Posterior vena cava (tissue), 2 donors: ENCODE measurements at regions of chr13 and their contacts with region 1.

Region 1: GRCh38 chr13:33679658-33680012 is 138.3 kb upstream of the RFC3 start:
- DNase-seq: no peak

Region 2: DNA sequence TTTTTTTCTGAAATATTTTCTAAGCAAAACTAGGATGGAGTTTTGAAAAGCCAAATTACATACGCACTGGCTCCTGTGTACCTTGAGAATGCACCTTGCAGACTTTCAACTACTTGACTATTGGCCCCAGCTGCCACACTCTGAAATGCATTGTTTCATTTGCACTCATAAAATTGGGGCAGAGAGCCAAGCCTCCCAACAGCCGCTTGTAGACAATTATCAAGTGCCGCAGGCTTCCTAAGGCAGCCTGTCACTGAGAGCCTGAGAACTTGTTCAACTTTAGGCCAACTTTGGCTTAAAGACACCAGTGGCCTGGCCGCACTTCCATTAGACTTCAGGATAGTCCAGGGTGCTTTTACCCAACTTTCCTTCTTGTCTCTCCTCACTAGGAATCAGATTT is 278.4 kb before region 1 on chr13:
- intact Hi-C with region 1: no loop called
- DNase-seq: no peak

Region 3: GRCh38 chr13:33999811-34000605 is 320.4 kb after region 1 on chr13:
- intact Hi-C with region 1: loop called in 1 of 2 experiments (anchors 5 kb)
- DNase-seq: no peak